ENCODE measurements at regions of chr9 and their contacts with region 1.

Region 1: GRCh38 chr9:114004221-114004716 is 73.8 kb downstream of the AMBP start:
- DNase-seq: no peak
- H3K4me3 ChIP-seq: no peak overlapping the region
- CTCF ChIP-seq: no peak

Region 2: GRCh38 chr9:113807173-113808061 is 196.9 kb before region 1 on chr9:
- in situ Hi-C with region 1: loop called (anchors 25 kb)
- DNase-seq: peak; percentile 33
- H3K4me3 ChIP-seq: no peak overlapping the region
- CTCF ChIP-seq: peak; percentile 89

Region 3: DNA sequence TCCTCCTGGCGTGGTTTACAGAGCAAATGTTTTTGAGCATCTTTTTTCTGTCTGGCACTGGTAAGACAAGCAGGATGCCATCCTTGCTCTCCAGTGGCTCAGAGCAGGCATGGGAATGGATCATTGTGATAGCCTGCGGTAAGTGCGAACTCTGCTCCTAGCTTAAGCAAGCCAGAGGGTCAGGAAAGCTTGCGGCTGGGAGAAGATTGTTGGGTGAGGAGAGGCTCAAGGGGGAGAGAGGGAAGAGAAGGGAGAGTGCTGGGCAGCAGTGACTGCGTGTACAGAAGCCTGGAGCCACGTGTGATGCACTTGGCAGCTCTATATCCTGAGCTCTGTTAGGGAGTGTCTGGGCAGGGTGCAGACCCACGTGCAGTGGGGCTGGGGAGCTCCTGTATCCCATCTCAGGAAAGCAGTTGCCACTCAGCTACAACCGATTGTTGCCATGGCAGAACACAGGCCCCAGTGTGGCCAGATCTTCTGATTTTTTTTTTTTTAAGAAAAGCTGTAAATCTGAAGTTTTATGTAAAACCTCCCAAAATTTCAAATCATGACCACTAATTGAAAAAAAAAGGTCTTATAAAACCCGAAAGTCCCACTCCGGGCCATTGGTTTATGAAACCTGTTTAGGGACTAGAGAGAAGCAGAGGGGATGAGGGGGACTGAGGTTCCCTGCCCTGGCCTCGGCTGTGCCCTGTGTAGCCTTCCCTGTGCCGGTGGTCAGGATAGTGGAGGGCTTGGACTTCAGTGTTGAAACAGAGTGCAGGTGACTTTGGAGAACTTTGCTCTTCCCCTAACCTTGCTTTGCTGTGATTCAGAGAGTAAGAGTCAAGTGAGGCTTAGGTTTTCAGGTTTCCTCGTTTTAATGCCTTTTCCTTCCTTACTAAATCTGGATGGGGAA is 60.9 kb before region 1 on chr9:
- in situ Hi-C with region 1: no loop called
- DNase-seq: no peak
- H3K4me3 ChIP-seq: no peak overlapping the region
- CTCF ChIP-seq: no peak

Region 4: GRCh38 chr9:114037961-114038723 is 33.9 kb after region 1 on chr9:
- in situ Hi-C with region 1: no loop called
- DNase-seq: peak; percentile 8
- H3K4me3 ChIP-seq: no peak overlapping the region
- CTCF ChIP-seq: no peak